Caco-2 (cell line): ENCODE measurements at regions of chr9 and their contacts with region 1.

Region 1: DNA sequence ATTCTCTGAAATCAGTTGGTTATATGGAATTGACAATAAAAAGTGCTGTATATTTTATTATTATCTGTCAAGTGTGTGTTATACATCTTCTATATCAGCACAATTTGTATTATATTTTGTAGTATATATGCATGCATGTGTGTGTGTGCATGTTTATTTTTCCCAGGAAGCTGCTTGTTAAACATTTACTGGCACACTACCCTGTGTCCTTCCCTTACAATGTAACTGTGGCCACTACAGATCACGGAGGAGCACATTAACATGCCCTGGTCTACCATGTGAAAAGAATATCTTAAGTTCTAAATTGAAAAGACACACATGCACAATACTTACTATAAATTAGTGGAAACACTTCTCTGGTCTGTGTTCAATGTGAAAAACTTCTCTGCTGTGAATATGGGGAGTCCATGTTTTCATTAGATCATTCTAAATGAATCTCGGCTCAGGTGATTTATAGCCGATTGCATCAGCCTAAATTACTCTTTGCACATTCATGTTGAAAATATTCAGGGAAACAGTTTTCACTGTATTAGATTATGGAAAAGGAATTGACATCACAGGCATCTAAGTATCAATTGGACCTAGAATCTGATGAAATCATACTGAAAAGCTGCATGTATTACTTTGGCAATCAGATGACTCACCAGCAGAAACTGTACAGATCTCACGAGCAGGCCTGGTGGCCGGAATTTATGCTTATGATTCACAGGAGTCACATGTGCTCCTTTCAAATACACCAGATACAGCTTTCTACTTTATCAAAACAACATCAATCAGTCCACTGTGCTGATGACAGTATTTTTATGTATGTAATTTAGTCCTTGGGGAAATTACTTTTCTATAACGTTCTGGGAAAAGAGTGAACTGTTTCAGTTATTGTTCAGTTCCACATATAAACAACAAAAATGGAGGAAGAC is 39.4 kb downstream of the LURAP1L start:
- DNase-seq: peak; percentile 45 to 46
- H3K4me3 ChIP-seq: no peak overlapping the region
- H3K4me3 Mint-ChIP-seq: no peak overlapping the region
- H3K27ac Mint-ChIP-seq: peak overlapping the region; percentile 82
- H3K4me1 ChIP-seq: no peaks in the 10 kb centered on the region
- H3K4me1 Mint-ChIP-seq: no peaks in the 10 kb centered on the region
- H3K27me3 ChIP-seq: no peaks in the 10 kb centered on the region
- H3K27me3 Mint-ChIP-seq: no peaks in the 10 kb centered on the region
- CTCF ChIP-seq: no peak

Region 2: DNA sequence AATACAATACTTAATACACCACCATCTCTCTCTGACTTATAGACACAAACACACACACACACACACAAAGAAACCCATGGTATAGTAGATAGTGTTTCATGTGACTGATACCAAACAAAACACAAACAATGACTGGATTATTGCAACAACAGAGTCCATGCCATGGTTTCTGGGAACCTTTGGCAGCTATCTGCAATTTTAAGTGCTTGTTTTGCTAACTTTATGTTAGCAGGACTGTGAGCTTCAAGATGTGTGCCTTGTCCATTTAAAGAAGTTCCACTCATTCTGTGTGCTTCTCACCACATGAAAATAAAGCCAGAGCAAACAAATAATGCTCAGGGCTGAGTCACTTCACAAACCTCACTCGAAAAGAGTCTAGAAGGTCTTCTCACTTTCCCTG is 54.5 kb before region 1 on chr9:
- CTCF ChIA-PET with region 1: no interaction called
- POLR2A ChIA-PET with region 1: no interaction called
- intact Hi-C with region 1: loop called (anchors 2 kb)
- DNase-seq: no peak
- H3K4me3 ChIP-seq: no peak overlapping the region
- H3K4me3 Mint-ChIP-seq: no peak overlapping the region
- H3K27ac Mint-ChIP-seq: no peak overlapping the region
- H3K4me1 ChIP-seq: no peaks in the 10 kb centered on the region
- H3K4me1 Mint-ChIP-seq: peaks cover 6% of the 10 kb centered on the region
- H3K27me3 ChIP-seq: no peaks in the 10 kb centered on the region
- H3K27me3 Mint-ChIP-seq: no peaks in the 10 kb centered on the region
- CTCF ChIP-seq: no peak